GM10248 (cell line): ENCODE measurements at regions of chr1 and their contacts with region 1.

Region 1: GRCh38 chr1:91165033-91165654 is 143.3 kb upstream of the ZNF644 start:
- DNase-seq: peak; percentile 81
- CTCF ChIP-seq: peak; percentile 100

Region 2: GRCh38 chr1:90295534-90295933 is 869.6 kb before region 1 on chr1:
- CTCF ChIA-PET with region 1: no interaction called
- POLR2A ChIA-PET with region 1: no interaction called
- DNase-seq: no peak
- CTCF ChIP-seq: no peak

Region 3: DNA sequence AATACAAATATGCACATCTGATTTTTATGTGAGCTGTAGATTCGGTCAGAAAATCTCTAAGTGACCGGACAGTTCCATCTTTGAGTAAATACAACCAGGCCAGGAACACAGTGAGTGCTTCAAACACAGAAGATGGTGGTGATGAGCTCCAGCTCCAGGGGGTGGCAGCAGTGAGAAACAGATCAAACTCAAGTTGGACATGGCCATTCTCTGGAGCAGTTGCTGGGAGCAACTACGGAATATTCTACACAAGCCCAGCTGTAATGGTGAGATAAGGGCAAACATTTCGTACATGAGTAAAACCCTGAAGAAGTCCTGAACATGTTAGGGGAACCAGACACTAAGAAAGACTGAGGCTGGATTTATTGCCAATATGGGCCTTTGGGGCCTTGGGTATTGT is 548.7 kb before region 1 on chr1:
- CTCF ChIA-PET with region 1: interaction called, 12 read pairs
- POLR2A ChIA-PET with region 1: no interaction called
- DNase-seq: no peak
- CTCF ChIP-seq: peak; percentile 7

Region 4: DNA sequence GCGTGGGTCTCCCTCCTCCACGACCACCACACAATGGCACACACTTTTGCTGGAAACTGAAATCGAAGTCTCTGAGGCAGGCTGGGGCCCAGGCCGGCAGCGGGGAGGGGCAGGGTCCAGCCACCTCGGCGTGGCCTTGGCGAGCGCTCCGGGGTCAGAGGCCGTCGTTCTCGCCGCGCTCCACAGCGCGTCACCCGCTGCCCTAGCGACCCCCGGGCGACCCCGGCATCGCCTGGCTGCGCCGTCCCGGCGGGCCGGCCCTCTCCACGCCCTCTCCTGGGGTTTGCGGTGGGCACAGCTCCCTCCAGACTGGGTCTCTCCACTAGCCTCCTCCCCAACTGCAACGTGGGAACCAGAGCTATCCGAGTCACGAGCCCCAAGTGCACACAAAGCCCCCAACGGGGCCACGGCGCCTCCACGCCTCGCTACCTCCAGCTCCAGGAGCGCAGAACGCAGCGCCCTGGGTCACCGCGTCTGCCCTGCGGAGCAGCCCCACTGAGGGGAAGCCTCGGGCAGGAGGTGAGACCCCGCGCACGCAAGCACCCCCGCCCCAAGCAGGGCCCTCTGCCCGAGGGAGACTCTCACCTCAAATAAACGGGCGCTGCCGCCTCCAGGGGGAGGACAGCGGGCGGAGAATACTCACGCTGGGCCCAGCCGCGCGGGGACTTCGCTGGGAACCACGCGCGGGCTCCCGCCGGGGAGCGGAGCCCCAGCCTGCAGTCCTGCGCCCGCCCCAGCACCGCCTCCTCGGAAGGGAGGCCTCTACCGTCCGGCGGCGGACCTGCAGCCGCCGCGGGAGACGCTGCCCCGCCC is 314.0 kb before region 1 on chr1:
- CTCF ChIA-PET with region 1: interaction called, 15 read pairs
- POLR2A ChIA-PET with region 1: no interaction called
- DNase-seq: peak; percentile 92
- CTCF ChIP-seq: peak; percentile 63

Region 5: DNA sequence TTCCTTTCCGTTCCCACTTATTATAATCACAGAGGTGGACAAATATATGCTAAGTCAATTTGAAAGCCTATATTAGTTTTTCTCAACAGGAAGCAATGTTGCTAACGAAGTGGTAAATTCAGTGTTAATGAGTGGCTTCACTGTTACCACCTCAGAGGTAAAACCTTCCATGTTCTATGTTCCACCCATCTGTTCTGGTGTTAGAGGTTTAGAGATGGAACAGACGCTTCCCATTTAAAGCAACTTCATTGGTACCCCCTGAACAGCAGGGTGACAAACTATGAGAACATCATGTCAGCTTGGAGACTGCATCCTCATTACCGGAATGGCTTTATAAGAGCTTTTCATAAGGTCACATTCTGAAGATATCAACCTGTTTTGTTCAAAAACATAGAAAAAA is 221.2 kb before region 1 on chr1:
- CTCF ChIA-PET with region 1: no interaction called
- POLR2A ChIA-PET with region 1: no interaction called
- DNase-seq: no peak
- CTCF ChIP-seq: no peak

Region 6: GRCh38 chr1:91129017-91129416 is 36.1 kb before region 1 on chr1:
- CTCF ChIA-PET with region 1: interaction called, 17 read pairs
- POLR2A ChIA-PET with region 1: no interaction called
- DNase-seq: no peak
- CTCF ChIP-seq: no peak

Region 7: DNA sequence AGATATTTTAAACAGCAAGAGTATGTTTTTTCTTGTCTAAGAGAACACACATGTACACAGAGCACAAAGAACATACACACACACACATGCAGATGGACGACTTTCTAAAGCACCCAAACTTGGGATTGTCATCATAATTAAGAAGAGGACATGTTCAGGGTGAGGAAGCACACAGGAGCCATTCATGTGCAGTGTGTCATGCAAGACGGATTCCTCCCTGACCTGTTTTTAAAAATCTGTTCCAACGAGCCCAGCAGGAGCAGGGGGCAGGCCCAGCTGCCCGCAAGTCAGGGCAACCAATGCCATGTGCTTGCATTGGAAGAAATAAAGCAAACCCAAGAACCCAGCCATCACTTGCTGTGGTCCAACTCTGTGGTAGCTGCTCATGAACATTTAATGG is 24.0 kb after region 1 on chr1:
- CTCF ChIA-PET with region 1: interaction called, 11 read pairs
- POLR2A ChIA-PET with region 1: no interaction called
- DNase-seq: no peak
- CTCF ChIP-seq: no peak

Region 8: GRCh38 chr1:91234181-91234580 is 69.0 kb after region 1 on chr1:
- CTCF ChIA-PET with region 1: no interaction called
- POLR2A ChIA-PET with region 1: no interaction called
- DNase-seq: no peak
- CTCF ChIP-seq: no peak